ENCODE measurements at regions of chr10 and their contacts with region 1.

Region 1: GRCh38 chr10:12795315-12796110 is 206.0 kb downstream of the CCDC3 start:
- DNase-seq: no peak
- ATAC-seq: no peak
- H3K4me3 ChIP-seq: no peak overlapping the region
- H3K27ac ChIP-seq: no peak overlapping the region
- H3K4me1 ChIP-seq: peaks cover 2% of the 10 kb centered on the region; the same call in 1 of the 2 replicates
- H3K27me3 ChIP-seq: peaks cover 3% of the 10 kb centered on the region; the same call in 1 of the 2 replicates
- CTCF ChIP-seq: no peak
- POLR2A ChIP-seq: no peak
- RAD21 ChIP-seq: no peak

Region 2: DNA sequence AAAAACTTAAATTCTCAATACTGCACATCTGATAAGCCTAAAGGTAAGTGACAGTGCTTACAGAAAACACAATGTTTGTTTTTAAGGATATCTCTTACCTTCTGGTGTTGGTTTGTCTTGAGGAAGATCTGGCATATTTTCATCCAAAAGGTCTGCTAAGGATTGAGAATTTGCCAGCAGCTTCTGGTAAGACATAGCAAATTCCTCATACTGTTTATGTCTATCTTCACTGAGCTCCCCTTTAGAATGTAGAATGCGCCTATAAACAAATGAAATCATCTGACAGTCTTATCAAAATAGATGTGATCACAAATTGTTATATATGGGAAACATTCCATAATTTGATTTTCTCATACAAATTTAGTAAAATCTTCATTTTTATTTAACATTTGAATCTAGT is 781.6 kb before region 1 on chr10:
- CTCF ChIA-PET with region 1: no interaction called
- POLR2A ChIA-PET with region 1: interaction called, 12 read pairs
- dilution Hi-C with region 1: no loop called
- in situ Hi-C with region 1: no loop called
- intact Hi-C with region 1: no loop called
- DNase-seq: peak; percentile 47
- ATAC-seq: peak; percentile 40
- H3K4me3 ChIP-seq: no peak overlapping the region
- H3K27ac ChIP-seq: peak overlapping the region; percentile 63; the same call in 1 of the 2 replicates
- H3K4me1 ChIP-seq: peaks cover 3% of the 10 kb centered on the region; the same call in 1 of the 2 replicates
- H3K27me3 ChIP-seq: no peaks in the 10 kb centered on the region
- CTCF ChIP-seq: no peak
- POLR2A ChIP-seq: no peak
- RAD21 ChIP-seq: no peak

Region 3: DNA sequence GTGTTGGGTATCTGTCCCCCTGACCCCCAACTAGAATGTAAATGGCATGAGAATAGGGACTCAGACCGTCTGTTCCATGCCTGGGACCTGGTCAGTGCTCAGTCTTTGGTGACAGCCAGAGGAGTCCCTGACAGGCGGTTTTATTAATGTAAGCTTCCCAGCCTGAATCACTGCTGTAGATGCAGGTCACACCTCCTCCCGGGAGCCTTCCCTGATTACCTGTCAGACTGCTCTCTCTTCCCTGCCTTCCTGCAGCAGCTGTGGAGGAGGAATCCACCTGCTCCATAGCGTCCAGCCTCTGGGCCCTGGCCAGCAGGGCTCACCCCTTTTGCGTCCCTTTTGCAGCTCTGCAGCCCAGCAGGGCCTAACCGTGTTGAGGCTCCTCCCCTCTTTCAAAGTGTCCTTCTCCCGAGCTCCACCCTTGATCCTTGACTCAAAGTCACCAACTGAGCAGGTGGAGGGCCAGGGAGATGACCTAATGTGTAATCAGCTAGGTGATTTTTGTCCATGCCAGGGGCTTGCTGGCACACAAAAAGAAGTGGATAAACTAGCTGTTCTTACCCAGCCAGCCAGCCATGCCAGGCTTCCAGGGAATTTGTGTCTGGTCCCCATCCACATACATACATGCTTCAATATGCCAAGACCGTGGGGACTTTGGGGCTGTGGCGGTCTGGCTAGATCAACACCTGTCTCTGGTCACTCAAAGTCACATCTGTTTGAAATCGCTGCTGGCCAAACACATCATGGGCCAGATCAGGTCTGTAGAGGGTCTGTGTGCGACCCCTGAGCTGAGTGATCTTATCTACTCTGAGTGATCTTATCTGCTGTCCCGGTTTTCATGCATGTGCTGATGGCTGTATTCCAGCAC is 10.9 kb after region 1 on chr10:
- CTCF ChIA-PET with region 1: no interaction called
- POLR2A ChIA-PET with region 1: no interaction called
- dilution Hi-C with region 1: no loop called
- in situ Hi-C with region 1: no loop called
- intact Hi-C with region 1: no loop called
- DNase-seq: no peak
- ATAC-seq: no peak
- H3K4me3 ChIP-seq: no peak overlapping the region
- H3K27ac ChIP-seq: no peak overlapping the region
- H3K4me1 ChIP-seq: no peaks in the 10 kb centered on the region
- H3K27me3 ChIP-seq: no peaks in the 10 kb centered on the region; the same call in 1 of the 2 replicates
- CTCF ChIP-seq: no peak
- POLR2A ChIP-seq: no peak
- RAD21 ChIP-seq: no peak

Measured in IMR-90 (cell line).